ENCODE measurements at regions of chr3 and their contacts with region 1.

Region 1: GRCh38 chr3:170221924-170222646 is at the start of gene PRKCI:
- DNase-seq: peak; percentile 95 to 97
- ATAC-seq: peak; percentile 99 to 100 (median 99)
- H3K4me3 ChIP-seq: peak within 1 kb of the TSS; percentile 70 to 99 (median 94)
- H3K27ac ChIP-seq: peak within 1 kb of the TSS; percentile 34 to 97 (median 92)
- H3K4me1 ChIP-seq: peaks cover 3 to 26% (median 16%) of the 10 kb centered on the region in 9 donors
- H3K27me3 ChIP-seq: no peaks in the 10 kb centered on the region
- CTCF ChIP-seq: peak in 1 of 9 donors; percentile 11
- total RNA-seq, gene PRKCI: 9.7 to 21.0 (median 13.1) TPM

Region 2: DNA sequence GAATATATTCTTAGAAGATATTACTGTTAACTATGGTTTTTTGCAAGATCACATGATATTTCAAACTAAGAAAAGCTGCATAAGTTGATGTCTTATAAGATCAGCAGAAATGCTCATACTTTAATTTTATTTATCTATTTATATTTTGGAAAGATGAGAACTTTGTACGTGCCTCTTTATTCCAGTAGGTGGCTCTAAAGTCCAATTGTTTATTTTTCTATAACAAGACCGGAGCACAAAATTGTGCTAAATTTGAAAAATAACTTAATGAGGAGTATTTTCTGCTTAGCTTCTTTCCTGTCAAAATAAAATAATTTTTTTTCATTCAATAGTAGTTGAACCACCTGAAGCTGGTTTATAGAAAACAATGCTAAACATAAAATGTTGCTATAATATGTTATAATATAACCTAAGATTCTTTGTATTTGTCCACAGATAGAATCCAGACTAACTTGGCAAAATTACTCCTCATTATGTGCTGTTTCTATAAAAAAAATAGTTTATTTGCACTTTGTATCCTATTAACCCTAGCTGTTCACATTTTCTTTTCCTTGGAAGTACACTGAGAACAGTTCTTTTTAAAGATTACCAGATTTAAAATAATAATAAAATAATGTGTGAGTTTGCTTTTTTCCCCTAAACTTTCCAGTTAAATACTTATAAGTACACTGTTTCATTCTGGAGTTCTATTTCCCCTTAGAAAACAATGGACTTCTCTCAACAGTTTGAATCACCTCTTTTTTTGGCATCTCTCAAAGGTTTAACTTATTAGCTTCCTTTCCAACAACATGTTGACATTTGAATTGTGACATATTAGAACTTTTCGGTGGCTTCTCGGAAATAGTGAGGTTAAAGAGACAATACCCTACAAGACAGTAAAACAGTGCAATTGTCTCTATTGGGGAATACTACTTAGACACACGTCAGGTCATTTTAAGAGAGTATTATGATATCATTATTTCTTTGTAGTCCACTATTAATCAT is 1088.6 kb before region 1 on chr3:
- intact Hi-C with region 1: no loop called
- DNase-seq: no peak
- ATAC-seq: peak in 7 of 8 donors; percentile 33 to 83 (median 74)
- H3K4me3 ChIP-seq: peak overlapping the region in 2 of 10 donors; percentile 9 to 22
- H3K27ac ChIP-seq: peak overlapping the region in 7 of 10 donors; percentile 32 to 93 (median 59)
- H3K4me1 ChIP-seq: peaks cover 0 to 68% (median 7%) of the 10 kb centered on the region in 9 donors
- H3K27me3 ChIP-seq: peaks cover 0 to 18% (median 4%) of the 10 kb centered on the region in 7 donors
- CTCF ChIP-seq: peak; percentile 12 to 66 (median 48)

Region 3: DNA sequence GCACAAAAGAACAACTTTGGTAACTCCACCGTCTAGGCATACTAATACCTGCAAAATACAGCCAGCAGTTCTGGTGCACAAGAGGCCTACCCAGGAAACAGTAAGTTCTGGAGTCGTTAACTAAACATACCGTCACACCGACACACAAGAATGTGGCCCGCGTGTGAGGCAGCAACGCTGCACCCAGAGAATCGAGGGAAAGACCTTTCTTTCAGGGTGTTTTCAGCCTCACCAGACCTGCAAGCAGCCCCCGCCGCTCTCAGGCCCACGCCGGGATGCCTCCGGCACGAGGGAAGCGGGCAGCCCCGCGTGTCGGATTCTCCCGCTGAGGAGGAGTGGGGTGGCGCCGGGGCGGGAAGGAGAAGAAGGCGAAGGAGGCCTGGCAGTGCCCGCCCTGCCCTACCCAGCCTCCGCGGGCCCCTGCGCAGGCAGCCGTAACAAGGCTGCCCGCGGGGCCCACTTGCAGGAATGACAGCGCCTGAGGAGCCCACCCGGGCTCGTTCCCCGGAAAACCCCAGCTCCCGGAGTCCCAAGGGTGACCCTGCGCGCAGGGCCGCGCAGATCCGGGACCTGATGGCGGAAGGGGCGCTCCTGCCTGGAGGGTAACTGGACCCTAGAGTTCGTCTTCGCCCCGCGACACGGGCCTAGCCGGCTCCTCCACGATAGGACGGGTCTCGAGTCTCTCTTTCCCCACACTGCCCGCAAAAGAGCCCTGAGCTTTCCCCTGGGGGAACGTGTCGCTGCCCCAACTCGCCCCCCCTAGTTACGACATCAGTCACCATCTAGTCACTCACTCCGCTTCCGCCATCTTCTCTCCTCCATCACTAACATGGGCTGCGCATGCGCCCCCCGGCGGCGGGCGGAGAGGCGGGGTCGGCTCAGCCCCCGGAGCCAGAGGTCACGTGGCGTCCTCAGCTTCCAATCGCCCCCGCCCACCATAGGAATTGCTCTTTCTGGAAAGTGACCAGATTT is 40.9 kb before region 1 on chr3 and contains the start of gene PHC3:
- intact Hi-C with region 1: loop called in 2 of 10 experiments (anchors 2 to 5 kb)
- DNase-seq: peak; percentile 95
- ATAC-seq: peak; percentile 93 to 98 (median 97)
- H3K4me3 ChIP-seq: peak within 1 kb of the TSS; percentile 71 to 99 (median 88)
- H3K27ac ChIP-seq: peak within 1 kb of the TSS; percentile 91 to 99 (median 94)
- H3K4me1 ChIP-seq: peaks cover 0 to 28% (median 23%) of the 10 kb centered on the region in 9 donors
- H3K27me3 ChIP-seq: no peaks in the 10 kb centered on the region
- CTCF ChIP-seq: peak in 7 of 9 donors; percentile 7 to 46 (median 26)
- total RNA-seq, gene PHC3: 39.6 to 70.8 (median 56.2) TPM

Region 4: GRCh38 chr3:170189398-170190256 is 32.5 kb before region 1 on chr3:
- intact Hi-C with region 1: loop called in 1 of 10 experiments (anchors 5 kb)
- DNase-seq: no peak
- ATAC-seq: peak in 2 of 8 donors; percentile 12 to 35
- H3K4me3 ChIP-seq: no peak overlapping the region
- H3K27ac ChIP-seq: no peak overlapping the region
- H3K4me1 ChIP-seq: no peaks in the 10 kb centered on the region
- H3K27me3 ChIP-seq: peaks cover 0 to 3% (median 0%) of the 10 kb centered on the region in 7 donors
- CTCF ChIP-seq: no peak

Region 5: DNA sequence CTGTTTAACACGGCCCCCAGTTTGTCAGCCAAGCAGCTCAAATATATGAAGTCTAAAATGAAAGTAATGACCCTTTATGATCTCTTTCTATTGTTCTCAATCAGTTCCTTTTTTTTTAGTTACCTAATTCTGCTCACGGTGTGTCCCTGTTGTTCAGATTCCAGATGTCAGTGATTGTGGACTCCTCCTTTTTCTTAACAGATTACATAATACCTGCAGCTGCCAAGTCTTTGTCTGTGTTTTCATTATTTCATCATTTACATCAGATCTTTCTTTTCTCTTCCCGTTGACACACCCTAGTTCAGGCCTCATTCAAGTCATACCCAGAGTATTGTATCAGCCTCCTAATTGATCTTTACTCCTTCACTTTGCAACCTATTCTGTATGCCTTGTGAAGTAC is 79.3 kb after region 1 on chr3:
- intact Hi-C with region 1: loop called in 1 of 10 experiments (anchors 5 kb)
- DNase-seq: no peak
- ATAC-seq: peak in 4 of 8 donors; percentile 35 to 67 (median 48)
- H3K4me3 ChIP-seq: no peak overlapping the region
- H3K27ac ChIP-seq: peak overlapping the region in 3 of 10 donors; percentile 6 to 54 (median 29)
- H3K4me1 ChIP-seq: peaks cover 0 to 10% (median 0%) of the 10 kb centered on the region in 9 donors
- H3K27me3 ChIP-seq: no peaks in the 10 kb centered on the region
- CTCF ChIP-seq: no peak

Region 6: DNA sequence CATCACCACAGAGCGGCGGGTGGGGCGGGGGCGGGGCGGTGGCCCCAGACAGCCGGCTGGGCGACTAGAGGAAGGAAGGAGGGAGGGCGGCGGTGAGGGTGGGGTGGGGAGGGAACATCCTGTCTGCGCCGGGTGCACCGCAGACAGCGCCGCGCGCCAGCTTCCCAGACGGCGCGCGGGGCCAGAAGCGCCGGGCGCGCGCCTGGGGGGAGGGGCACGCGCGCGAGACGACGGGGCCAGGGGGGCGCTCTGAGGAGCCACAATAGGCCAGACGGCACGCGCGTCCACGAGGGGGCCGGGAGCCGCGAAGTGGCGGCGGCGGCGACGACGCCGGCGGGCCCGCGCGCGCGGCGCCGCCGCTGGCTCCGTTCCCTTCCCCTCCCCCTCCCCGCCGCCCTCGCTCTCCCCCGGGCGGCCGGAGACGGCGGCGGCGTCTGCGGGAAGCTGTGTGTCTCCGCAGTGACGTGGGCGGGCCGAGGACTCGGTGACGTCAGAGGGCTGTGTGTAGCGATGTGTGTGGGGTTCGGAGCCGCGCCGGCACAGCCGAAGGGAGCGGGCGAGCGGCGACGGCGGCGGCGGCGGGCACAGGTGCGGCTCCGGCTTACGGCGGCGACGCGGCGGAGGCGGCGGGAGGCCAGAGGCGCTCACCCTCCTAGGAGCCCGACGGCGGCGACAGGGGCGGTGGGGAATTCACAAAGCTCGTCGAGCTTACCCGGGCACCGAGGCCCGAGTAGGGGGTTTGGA is 135.3 kb after region 1 on chr3 and contains the start of gene SKIL:
- intact Hi-C with region 1: loop called in 1 of 10 experiments (anchors 2 kb)
- DNase-seq: peak; percentile 97 to 98
- ATAC-seq: peak; percentile 82 to 90 (median 86)
- H3K4me3 ChIP-seq: peak within 1 kb of the TSS; percentile 77 to 100 (median 98)
- H3K27ac ChIP-seq: peak within 1 kb of the TSS; percentile 97 to 100 (median 100)
- H3K4me1 ChIP-seq: peaks cover 0 to 65% (median 47%) of the 10 kb centered on the region in 9 donors
- H3K27me3 ChIP-seq: no peaks in the 10 kb centered on the region
- CTCF ChIP-seq: peak in 4 of 9 donors; percentile 9 to 28 (median 22)
- total RNA-seq, gene SKIL: 17.7 to 32.1 (median 24.9) TPM